ENCODE measurements at regions of chr19 and their contacts with region 1.

Region 1: DNA sequence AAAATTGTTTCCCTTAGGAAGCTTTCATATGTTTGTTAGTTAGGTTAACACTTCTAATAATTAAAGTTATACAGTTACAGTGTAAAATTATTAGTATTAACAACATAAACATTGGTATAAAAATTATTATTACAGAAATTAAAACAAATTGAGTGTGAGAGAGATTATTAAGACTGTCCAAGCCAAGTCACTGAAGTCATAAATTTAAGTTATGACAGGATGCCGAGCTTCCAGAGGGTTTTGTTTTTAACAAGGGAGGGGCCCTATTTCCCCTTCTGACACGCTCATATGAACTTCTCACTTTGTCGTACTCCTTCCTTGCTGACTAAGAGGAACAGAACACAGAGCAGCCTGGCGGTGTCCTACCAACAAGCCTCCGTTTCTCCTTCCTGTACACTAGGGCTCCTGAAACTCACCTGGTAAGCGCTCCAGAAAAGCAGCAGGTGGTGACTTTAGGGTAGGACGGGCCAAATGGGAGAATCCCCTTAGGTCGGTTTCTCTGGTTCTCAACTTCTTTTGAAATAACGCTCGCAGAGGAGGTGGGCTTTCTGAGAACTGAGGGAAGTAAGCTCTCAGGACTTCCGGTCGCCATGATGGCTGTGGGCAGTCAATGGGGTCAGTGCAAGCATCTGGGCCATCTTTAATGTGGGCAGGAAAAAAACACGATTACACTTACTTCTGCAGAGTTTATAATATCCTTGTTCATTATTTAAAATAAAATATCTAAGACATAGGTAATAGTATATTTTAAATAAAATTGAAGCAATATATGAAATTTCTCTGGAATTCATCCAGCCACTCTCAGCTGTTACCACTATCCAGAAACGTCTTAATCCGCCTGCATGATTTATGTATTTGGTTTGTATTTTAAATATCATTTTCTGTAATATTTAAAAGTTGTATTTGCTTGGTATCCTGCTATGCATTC is at the start of gene CARD8:
- DNase-seq: peak; percentile 80
- H3K4me3 ChIP-seq: peak within 1 kb of the TSS; percentile 45 to 61
- H3K27ac ChIP-seq: peak within 1 kb of the TSS; percentile 83 to 90
- H3K4me1 ChIP-seq: peaks cover 6% of the 10 kb centered on the region
- H3K27me3 ChIP-seq: no peaks in the 10 kb centered on the region
- CTCF ChIP-seq: peak in 2 of 4 experiments; percentile 22 to 32
- POLR2A ChIP-seq: no peak
- total RNA-seq, gene CARD8: 12.6 to 49.0 TPM

Region 2: DNA sequence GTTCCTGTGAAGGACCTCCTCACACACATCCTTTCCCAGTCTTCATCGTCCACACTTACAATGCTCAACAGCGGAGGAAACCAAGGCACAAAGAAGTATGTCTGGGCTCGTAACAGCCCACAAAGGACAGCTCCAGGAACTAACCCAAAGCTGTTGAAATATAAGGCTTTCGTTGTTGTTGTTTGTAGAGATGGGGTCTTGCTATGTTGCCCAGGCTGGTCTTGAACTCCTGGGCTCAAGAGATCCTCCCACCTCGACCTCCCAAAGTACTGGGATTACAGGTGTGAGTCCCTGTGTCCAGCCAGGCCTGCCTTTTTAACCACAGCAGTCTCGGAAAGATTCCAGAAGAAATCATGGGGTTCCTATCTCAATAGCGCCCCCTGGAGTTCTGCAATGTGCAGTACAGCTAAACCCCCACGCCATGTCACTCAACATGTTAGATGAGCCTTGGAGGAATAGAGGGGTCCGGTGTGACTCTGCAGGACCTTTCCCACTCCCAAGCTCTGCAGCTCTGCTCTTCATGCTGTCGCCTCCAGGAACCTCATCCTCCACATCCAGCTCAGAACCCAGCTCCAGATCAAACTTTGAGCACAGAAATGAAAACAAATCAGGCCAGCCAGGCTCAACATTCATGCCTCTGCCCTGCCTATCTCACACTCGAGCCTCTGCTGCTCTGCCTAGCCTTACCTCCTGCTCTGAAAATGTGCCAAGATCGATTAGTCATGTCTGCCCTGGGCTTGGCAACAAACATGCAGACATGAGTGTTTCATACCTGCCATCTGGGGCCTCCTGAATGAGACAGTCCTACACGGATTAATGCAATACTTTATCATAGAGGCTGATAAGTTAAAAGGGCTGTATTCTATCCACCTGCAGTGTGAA is 152.5 kb before region 1 on chr19:
- intact Hi-C with region 1: loop called (anchors 10 kb)
- DNase-seq: peak; percentile 32
- H3K4me3 ChIP-seq: no peak overlapping the region
- H3K27ac ChIP-seq: no peak overlapping the region
- H3K4me1 ChIP-seq: no peaks in the 10 kb centered on the region
- H3K27me3 ChIP-seq: no peaks in the 10 kb centered on the region
- CTCF ChIP-seq: peak; percentile 53 to 89 (median 76)
- POLR2A ChIP-seq: no peak